GM18951 (cell line): ENCODE measurements at regions of chr5 and their contacts with region 1.

Region 1: DNA sequence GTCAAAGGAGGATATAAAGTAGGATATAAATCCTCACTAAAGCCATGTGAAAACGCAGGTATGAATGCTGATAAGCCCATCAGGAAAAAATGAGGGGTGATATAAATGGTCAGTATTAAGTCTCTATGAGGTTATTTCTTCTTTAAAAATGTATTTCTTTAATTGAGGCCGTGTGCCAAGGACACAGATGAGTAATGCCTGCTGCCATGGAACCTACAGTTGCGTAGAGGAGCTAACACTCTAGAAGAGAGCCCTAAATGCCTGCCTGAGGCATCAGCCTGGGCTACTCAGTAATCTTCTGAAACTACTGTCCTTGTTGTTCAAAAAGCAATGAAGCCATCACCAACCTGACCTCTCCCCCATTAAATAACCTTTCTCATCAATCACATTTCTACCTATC is 84.9 kb downstream of the KLHL3 start:
- POLR2A ChIP-seq: no peak

Region 2: DNA sequence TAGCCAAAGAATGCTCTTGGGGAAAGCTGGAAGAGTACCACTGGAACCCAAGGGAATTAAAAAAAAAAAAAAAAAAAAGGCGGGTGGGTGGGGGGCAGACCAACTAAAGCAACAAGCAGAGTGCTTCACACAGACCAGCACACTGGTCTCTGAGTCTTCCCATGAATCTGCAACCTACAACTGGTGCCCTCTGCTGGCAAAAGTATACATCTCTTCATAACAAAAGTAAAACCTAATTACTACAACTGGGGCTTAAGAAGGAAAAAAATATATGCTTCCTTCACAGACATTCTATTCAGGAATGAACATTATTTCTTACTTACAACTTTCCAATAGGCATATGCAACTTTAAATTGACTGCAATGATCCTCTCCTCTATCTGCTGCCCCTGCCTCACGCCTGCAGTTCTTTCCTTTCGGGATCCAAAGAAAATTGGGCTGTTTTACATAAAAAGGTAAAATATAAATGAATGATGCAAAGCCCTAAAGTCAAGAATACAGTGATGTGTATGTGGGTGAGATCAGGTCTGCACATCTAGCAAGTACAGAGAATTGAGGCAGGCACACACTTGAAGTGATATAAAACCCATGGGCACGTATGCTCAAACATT is 92.1 kb after region 1 on chr5:
- in situ Hi-C with region 1: loop called (anchors 10 kb)
- POLR2A ChIP-seq: no peak